SK-N-SH (cell line): ENCODE measurements at regions of chr6 and their contacts with region 1.

Region 1: GRCh38 chr6:146700078-146700686 is 101.4 kb downstream of the ADGB start:
- DNase-seq: peak; percentile 48
- H3K4me3 ChIP-seq: peak overlapping the region in 1 of 2 experiments; percentile 10; a peak in 1 of 4 replicates
- H3K27ac ChIP-seq: no peak overlapping the region
- H3K4me1 ChIP-seq: peaks cover 0 to 2% of the 10 kb centered on the region in 2 experiments; a peak in 1 of 4 replicates
- H3K27me3 ChIP-seq: no peaks in the 10 kb centered on the region
- CTCF ChIP-seq: peak; percentile 79
- EP300 ChIP-seq: 0 out of 4 replicates have a peak, but pooled peaks of 1 of the 2 experiments have one; percentile 11
- RAD21 ChIP-seq: peak; percentile 95

Region 2: GRCh38 chr6:145929037-145929633 is 771.0 kb before region 1 on chr6:
- CTCF ChIA-PET with region 1: interaction called, 25 read pairs
- POLR2A ChIA-PET with region 1: no interaction called
- DNase-seq: peak; percentile 3
- H3K4me3 ChIP-seq: no peak overlapping the region
- H3K27ac ChIP-seq: no peak overlapping the region
- H3K4me1 ChIP-seq: no peaks in the 10 kb centered on the region
- H3K27me3 ChIP-seq: no peaks in the 10 kb centered on the region
- CTCF ChIP-seq: peak; percentile 79
- EP300 ChIP-seq: no peak
- RAD21 ChIP-seq: peak; percentile 70

Region 3: DNA sequence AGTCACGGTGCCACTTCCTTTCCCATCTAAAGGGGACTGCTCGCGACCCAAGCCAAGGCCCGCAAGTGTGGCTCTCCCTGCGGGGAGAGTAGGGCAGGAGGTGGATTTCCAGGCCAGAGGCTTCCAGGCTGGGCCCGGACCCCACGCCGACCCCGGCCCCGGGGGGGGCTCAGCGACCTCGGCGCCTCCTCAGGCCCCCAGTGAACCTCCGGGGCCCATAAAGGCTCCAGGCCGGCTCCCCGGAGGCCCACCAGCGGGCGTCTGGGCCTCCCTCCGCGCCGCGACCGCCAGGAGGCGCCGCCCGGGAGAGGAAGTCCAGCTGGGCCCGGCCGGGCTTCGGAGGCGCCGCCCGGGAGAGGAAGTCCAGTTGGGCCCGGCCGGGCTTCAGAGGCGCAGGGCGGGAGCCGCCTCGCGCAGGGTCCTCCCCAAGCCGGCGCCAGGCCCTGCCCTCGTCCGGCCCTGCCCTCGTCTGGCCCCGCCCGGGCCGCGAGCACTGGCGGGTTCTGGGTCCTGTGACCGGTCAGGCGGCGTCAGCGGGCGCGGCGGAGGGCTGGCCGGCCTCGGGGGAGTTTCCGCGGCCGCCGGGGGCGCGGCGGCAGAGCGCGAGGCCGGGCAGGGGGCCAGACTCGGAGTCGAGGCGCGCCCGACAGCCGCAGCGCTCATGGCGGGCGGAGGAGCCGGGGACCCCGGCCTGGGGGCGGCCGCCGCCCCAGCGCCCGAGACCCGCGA is 156.8 kb before region 1 on chr6 and contains the start of gene RAB32:
- CTCF ChIA-PET with region 1: interaction called, 13 read pairs
- POLR2A ChIA-PET with region 1: no interaction called
- DNase-seq: peak; percentile 95
- H3K4me3 ChIP-seq: peak within 1 kb of the TSS; percentile 81 to 88
- H3K27ac ChIP-seq: peak within 1 kb of the TSS; percentile 79 to 89
- H3K4me1 ChIP-seq: peaks cover 5 to 16% of the 10 kb centered on the region in 2 experiments; a peak in 3 of 4 replicates
- H3K27me3 ChIP-seq: no peaks in the 10 kb centered on the region
- CTCF ChIP-seq: peak; percentile 60
- EP300 ChIP-seq: no peak
- RAD21 ChIP-seq: peak; percentile 45
- polyA plus RNA-seq, gene RAB32: 36.9 and 39.6 TPM in 2 replicates

Region 4: DNA sequence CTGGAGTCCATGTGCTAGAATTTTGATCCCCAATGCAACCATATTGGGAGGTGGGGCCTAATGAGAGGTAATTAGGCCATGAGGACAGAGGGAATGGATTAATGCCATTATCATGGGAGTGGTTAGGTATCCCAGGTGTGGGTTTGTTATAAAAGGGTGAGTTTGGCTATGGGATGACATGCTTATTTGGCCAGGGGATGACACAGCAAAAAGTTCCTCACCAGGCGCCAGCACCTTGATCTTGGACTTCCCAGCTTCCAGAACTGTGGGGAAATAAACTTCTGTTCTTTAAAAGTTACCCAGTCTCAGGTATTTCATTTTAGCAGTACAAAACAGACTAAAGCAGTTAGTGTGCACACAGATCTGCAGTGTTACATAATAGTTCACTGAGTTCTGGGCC is 17.3 kb before region 1 on chr6:
- CTCF ChIA-PET with region 1: no interaction called
- POLR2A ChIA-PET with region 1: no interaction called
- DNase-seq: no peak
- H3K4me3 ChIP-seq: no peak overlapping the region
- H3K27ac ChIP-seq: no peak overlapping the region
- H3K4me1 ChIP-seq: no peaks in the 10 kb centered on the region
- H3K27me3 ChIP-seq: no peaks in the 10 kb centered on the region
- CTCF ChIP-seq: no peak
- EP300 ChIP-seq: no peak
- RAD21 ChIP-seq: no peak